K562 (cell line): ENCODE measurements at regions of chr11 and their contacts with region 1.

Region 1: GRCh38 chr11:47642099-47642855 is at the start of gene MTCH2:
- DNase-seq: peak; percentile 97 to 99 (median 98)
- ATAC-seq: peak; percentile 90
- H3K4me3 ChIP-seq: peak within 1 kb of the TSS; percentile 98
- H3K27ac ChIP-seq: peak within 1 kb of the TSS; percentile 99
- H3K4me1 ChIP-seq: peaks cover 11 to 23% of the 10 kb centered on the region in 2 experiments; a peak in 4 of 5 replicates
- H3K27me3 ChIP-seq: no peaks in the 10 kb centered on the region
- CTCF ChIP-seq: peak in 2 of 3 experiments; percentile 38 to 47; a peak in 5 of 6 replicates
- EP300 ChIP-seq: peak; percentile 62; the same call in 1 of the 2 replicates
- POLR2A ChIP-seq: peak; percentile 94
- RAD21 ChIP-seq: no peak
- polyA plus RNA-seq, gene MTCH2: 607 to 620 TPM

Region 2: GRCh38 chr11:47175713-47176327 is 466.5 kb before region 1 on chr11:
- CTCF ChIA-PET with region 1: no interaction called
- POLR2A ChIA-PET with region 1: no interaction called
- in situ Hi-C with region 1: no loop called
- intact Hi-C with region 1: no loop called
- DNase-seq: peak in 1 of 4 experiments; percentile 59
- ATAC-seq: no peak
- H3K4me3 ChIP-seq: peak overlapping the region; percentile 89
- H3K27ac ChIP-seq: peak overlapping the region; percentile 97
- H3K4me1 ChIP-seq: peaks cover 16 to 32% of the 10 kb centered on the region in 2 experiments
- H3K27me3 ChIP-seq: no peaks in the 10 kb centered on the region
- CTCF ChIP-seq: no peak; a peak in 1 of 6 replicates
- EP300 ChIP-seq: no peak
- POLR2A ChIP-seq: no peak
- RAD21 ChIP-seq: no peak

Region 3: GRCh38 chr11:47407746-47408590 is 234.3 kb before region 1 on chr11 and contains the start of gene SLC39A13:
- CTCF ChIA-PET with region 1: no interaction called
- POLR2A ChIA-PET with region 1: no interaction called
- in situ Hi-C with region 1: no loop called
- intact Hi-C with region 1: no loop called
- DNase-seq: peak; percentile 95 to 98 (median 96)
- ATAC-seq: peak; percentile 95
- H3K4me3 ChIP-seq: peak within 1 kb of the TSS; percentile 62
- H3K27ac ChIP-seq: peak within 1 kb of the TSS; percentile 98
- H3K4me1 ChIP-seq: peaks cover 28 to 54% of the 10 kb centered on the region in 2 experiments
- H3K27me3 ChIP-seq: no peaks in the 10 kb centered on the region
- CTCF ChIP-seq: peak; percentile 92 to 95 (median 94)
- EP300 ChIP-seq: no peak; the same call in none of the 2 replicates
- POLR2A ChIP-seq: peak; percentile 74
- RAD21 ChIP-seq: peak; percentile 98 to 99
- polyA plus RNA-seq, gene SLC39A13: 0.17 to 0.24 TPM

Region 4: GRCh38 chr11:47552566-47553416 is 89.5 kb before region 1 on chr11 and contains the start of gene CELF1:
- CTCF ChIA-PET with region 1: no interaction called
- POLR2A ChIA-PET with region 1: no interaction called
- in situ Hi-C with region 1: no loop called
- intact Hi-C with region 1: no loop called
- DNase-seq: peak; percentile 87 to 94 (median 90)
- ATAC-seq: peak; percentile 96
- H3K4me3 ChIP-seq: peak within 1 kb of the TSS; percentile 100
- H3K27ac ChIP-seq: peak within 1 kb of the TSS; percentile 92
- H3K4me1 ChIP-seq: peaks cover 11 to 18% of the 10 kb centered on the region in 2 experiments; a peak in 4 of 5 replicates
- H3K27me3 ChIP-seq: no peaks in the 10 kb centered on the region
- CTCF ChIP-seq: peak; percentile 80 to 93 (median 92)
- EP300 ChIP-seq: no peak
- POLR2A ChIP-seq: peak; percentile 77
- RAD21 ChIP-seq: peak; percentile 22 to 54; a peak in 3 of 4 replicates
- polyA plus RNA-seq, gene CELF1: 11.3 to 21.6 TPM

Region 5: DNA sequence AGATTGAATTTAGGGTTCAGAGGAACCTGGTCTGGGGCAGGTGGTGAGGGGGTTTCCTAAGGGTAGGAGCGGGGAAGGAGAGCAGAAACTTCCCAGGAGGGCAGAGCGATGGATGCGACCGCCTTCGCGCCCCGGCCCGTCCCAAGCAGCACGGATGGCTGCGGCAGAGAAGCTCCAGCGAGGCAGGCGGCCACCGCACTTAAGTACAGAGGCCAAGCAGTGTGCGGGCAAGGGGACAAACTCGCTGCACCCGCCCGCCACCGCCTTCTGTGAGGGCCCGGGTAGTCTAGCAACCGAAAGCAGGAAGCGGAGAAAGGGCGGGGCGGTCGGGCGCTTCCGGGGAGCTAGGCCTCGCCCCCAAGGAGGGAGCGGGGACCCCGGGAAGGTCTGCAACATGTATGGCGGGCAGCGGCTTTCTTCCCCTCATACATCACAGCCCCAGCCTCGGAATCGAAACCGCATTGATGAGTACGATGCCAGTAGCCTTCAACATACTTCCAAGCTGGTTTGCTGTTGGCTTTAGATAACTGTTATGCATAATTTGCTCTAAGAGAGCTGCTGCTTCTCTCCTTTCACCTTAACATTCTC is 72.9 kb after region 1 on chr11 and contains the start of gene AGBL2:
- CTCF ChIA-PET with region 1: no interaction called
- POLR2A ChIA-PET with region 1: interaction called, 3 read pairs
- in situ Hi-C with region 1: no loop called
- intact Hi-C with region 1: loop called (anchors 5 kb)
- DNase-seq: peak; percentile 72 to 77 (median 74)
- ATAC-seq: peak; percentile 94
- H3K4me3 ChIP-seq: peak within 1 kb of the TSS; percentile 36
- H3K27ac ChIP-seq: peak within 1 kb of the TSS; percentile 43; the same call in 2 of the 3 replicates
- H3K4me1 ChIP-seq: peaks cover 0 to 7% of the 10 kb centered on the region in 2 experiments; a peak in 1 of 5 replicates
- H3K27me3 ChIP-seq: no peaks in the 10 kb centered on the region
- CTCF ChIP-seq: no peak
- EP300 ChIP-seq: no peak
- POLR2A ChIP-seq: peak; percentile 66
- RAD21 ChIP-seq: no peak
- polyA plus RNA-seq, gene AGBL2: 0.57 to 0.73 TPM

Region 6: DNA sequence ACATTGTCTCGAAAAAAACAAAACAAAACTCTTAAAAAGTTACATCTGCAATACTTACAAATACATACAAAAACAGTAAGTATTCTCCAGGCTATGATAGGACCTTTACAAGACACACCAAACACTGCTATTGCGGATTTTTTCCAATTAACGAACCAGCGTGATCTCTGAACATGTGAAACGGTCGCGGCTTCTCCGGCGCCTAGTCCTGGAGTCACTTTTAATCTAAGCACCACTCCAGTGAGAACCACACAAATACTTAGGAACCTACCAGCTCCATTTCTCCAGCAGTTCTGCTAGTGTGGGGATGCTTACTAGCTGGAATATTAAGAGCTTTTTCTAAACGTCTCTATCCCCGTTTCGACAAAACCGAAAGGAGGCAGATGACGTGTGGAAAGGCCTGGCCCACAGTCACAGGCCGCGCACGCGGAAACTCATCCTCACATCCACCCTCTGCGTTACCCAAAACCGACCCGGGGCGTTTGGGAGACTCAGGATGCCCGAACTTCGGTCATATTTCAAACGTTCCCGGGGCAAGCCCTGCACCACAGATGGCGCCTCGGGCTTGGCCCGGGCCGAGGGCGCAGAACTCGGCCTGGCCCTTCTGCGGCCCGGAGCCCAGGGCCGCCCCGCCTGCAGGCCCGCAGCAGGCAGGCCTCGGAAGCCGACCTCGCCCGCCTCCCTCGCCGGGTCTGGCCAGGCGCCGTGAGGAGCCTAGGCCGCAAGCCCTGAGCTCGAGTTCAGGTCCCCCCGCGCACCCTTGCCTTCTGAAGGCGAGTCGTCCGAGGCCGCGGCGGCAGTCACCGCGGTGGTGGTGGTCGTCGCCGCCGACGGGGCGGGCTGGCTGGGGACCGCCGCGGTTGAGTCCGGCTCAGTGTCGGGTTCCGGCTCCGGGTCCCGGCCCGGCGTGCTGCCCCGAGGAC is 124.3 kb after region 1 on chr11:
- CTCF ChIA-PET with region 1: no interaction called
- POLR2A ChIA-PET with region 1: no interaction called
- in situ Hi-C with region 1: no loop called
- intact Hi-C with region 1: loop called (anchors 2 kb)
- DNase-seq: peak in 2 of 4 experiments; percentile 28 to 72
- ATAC-seq: peak; percentile 47
- H3K4me3 ChIP-seq: peak overlapping the region; percentile 85
- H3K27ac ChIP-seq: peak overlapping the region; percentile 93
- H3K4me1 ChIP-seq: peaks cover 8 to 23% of the 10 kb centered on the region in 2 experiments; a peak in 4 of 5 replicates
- H3K27me3 ChIP-seq: no peaks in the 10 kb centered on the region
- CTCF ChIP-seq: no peak
- EP300 ChIP-seq: no peak
- POLR2A ChIP-seq: no peak
- RAD21 ChIP-seq: no peak

Region 7: DNA sequence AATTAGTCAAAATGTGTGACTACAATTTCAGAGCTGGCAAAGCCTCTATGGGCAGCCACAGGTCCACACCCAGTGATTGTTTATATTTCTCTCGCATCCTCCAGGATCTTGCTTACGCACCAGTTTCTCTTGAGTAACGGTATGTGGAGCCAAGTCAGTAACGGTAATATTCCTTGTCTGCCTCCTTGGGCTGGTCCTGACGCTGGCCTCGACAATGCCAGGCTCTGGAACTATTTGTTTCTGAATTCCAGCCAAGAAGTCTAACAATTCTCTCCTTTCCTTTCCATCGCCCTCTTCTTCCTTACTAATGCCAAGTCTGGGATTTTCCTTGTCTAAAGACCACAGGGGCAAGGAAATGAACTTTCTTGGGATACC is 215.9 kb after region 1 on chr11:
- CTCF ChIA-PET with region 1: no interaction called
- POLR2A ChIA-PET with region 1: no interaction called
- in situ Hi-C with region 1: no loop called
- intact Hi-C with region 1: loop called (anchors 10 kb)
- DNase-seq: no peak
- ATAC-seq: no peak
- H3K4me3 ChIP-seq: no peak overlapping the region
- H3K27ac ChIP-seq: no peak overlapping the region
- H3K4me1 ChIP-seq: peaks cover 0 to 9% of the 10 kb centered on the region in 2 experiments; a peak in 3 of 5 replicates
- H3K27me3 ChIP-seq: no peaks in the 10 kb centered on the region
- CTCF ChIP-seq: no peak
- EP300 ChIP-seq: no peak
- POLR2A ChIP-seq: no peak
- RAD21 ChIP-seq: no peak

Region 8: DNA sequence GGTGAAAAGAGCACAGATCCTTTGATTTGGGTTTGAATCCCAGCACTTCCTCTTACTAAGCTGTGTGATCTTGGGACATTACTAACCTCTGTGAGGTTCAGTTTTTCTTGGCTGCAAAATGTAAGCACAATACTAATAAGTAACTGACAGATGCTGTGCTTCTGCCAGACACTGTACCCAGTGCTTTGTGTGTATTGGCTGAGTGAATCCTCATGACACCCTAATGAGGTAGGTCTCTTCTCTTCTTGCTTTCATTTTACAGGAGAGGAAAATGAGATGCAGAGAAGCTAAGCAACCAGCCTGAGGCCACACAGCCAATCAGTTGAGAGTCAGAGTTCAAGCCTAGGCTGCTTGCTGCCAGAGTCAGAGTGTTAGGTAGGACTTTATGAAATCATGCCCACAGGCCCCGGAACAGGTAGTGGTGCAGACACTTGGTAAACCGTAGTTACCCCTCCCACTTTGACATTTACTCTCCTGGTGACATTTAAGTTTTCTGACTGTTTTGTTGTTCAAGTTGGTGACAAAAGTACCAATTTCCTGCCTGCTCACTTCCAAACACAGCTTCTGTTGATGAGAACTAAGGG is 359.3 kb after region 1 on chr11:
- CTCF ChIA-PET with region 1: no interaction called
- POLR2A ChIA-PET with region 1: no interaction called
- in situ Hi-C with region 1: no loop called
- intact Hi-C with region 1: no loop called
- DNase-seq: no peak
- ATAC-seq: no peak
- H3K4me3 ChIP-seq: no peak overlapping the region
- H3K27ac ChIP-seq: no peak overlapping the region
- H3K4me1 ChIP-seq: peaks cover 18 to 20% of the 10 kb centered on the region in 2 experiments
- H3K27me3 ChIP-seq: no peaks in the 10 kb centered on the region
- CTCF ChIP-seq: no peak
- EP300 ChIP-seq: no peak
- POLR2A ChIP-seq: no peak
- RAD21 ChIP-seq: no peak